ENCODE measurements at regions of chr7 and their contacts with region 1.

Region 1: DNA sequence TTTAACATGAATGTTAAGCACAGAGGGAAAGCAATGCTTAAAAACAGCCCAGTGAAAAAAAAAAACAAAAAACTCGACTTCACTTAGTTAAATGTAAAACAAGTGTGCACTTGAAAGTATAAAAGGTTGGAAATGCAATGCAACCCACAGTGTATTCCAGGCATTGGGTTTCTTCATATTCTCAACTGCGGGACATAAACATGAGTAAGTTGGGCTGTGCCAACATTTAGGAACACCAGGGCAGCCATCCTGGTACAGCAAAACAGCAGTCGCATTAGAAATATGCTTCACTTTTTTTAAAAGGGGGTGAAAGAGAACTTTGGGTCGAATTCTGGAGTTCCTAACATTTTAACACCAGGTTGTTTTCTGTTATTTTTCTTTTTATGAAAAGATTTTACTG is 937 bp downstream of the STEAP1 start:
- DNase-seq: no peak
- ATAC-seq: no peak
- H3K4me3 ChIP-seq: no peak overlapping the region
- H3K27ac ChIP-seq: no peak overlapping the region
- H3K4me1 ChIP-seq: peaks cover 0 to 10% (median 0%) of the 10 kb centered on the region in 12 donors
- H3K27me3 ChIP-seq: no peaks in the 10 kb centered on the region
- CTCF ChIP-seq: no peak
- POLR2A ChIP-seq: no peak

Region 2: GRCh38 chr7:90211391-90212148 is 56.4 kb after region 1 on chr7 and contains the start of gene STEAP2:
- intact Hi-C with region 1: loop called in 1 of 10 experiments (anchors 5 kb)
- DNase-seq: peak; percentile 81 to 95 (median 90)
- ATAC-seq: peak; percentile 96 to 100 (median 99)
- H3K4me3 ChIP-seq: peak within 1 kb of the TSS; percentile 59 to 77 (median 69)
- H3K27ac ChIP-seq: peak within 1 kb of the TSS; percentile 55 to 87 (median 74)
- H3K4me1 ChIP-seq: peaks cover 0 to 18% (median 5%) of the 10 kb centered on the region in 12 donors
- H3K27me3 ChIP-seq: peaks cover 0 to 33% (median 0%) of the 10 kb centered on the region in 9 donors
- CTCF ChIP-seq: peak in 11 of 12 donors; percentile 29 to 68 (median 47)
- POLR2A ChIP-seq: peak in 1 of 2 donors; percentile 30
- total RNA-seq, gene STEAP2: 6.2 to 16.7 (median 9.1) TPM

Region 3: GRCh38 chr7:90256778-90257177 is 101.6 kb after region 1 on chr7:
- intact Hi-C with region 1: loop called in 6 of 10 experiments (anchors 5 to 10 kb)
- DNase-seq: no peak
- ATAC-seq: no peak
- H3K4me3 ChIP-seq: no peak overlapping the region
- H3K27ac ChIP-seq: no peak overlapping the region
- H3K4me1 ChIP-seq: no peaks in the 10 kb centered on the region
- H3K27me3 ChIP-seq: no peaks in the 10 kb centered on the region
- CTCF ChIP-seq: no peak
- POLR2A ChIP-seq: no peak

Region 4: GRCh38 chr7:90262438-90262837 is 107.2 kb after region 1 on chr7:
- intact Hi-C with region 1: loop called in 7 of 10 experiments (anchors 2 to 10 kb)
- DNase-seq: no peak
- ATAC-seq: peak in 1 of 4 donors; percentile 66
- H3K4me3 ChIP-seq: no peak overlapping the region
- H3K27ac ChIP-seq: no peak overlapping the region
- H3K4me1 ChIP-seq: no peaks in the 10 kb centered on the region
- H3K27me3 ChIP-seq: no peaks in the 10 kb centered on the region
- CTCF ChIP-seq: peak in 11 of 12 donors; percentile 26 to 61 (median 40)
- POLR2A ChIP-seq: no peak

Region 5: DNA sequence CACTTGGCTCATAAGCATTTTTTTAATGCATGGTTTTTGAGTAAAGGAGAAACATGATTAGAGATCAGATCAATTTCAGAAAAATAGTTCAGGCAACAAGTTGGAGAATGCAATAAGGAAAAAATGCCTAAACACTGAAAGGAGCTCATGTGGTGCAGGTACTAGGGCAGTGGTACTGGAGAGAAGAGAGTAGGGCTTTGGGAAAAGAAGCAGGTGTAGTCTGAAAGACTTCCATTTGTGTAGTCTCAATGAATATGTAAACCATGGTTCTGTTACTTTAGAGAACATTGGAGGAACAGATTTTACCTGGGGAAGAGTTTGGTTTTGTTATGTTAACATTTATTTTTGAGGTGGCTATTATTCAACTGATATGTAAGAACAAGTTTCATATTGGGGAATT is 196.8 kb after region 1 on chr7:
- intact Hi-C with region 1: no loop called
- DNase-seq: no peak
- ATAC-seq: no peak
- H3K4me3 ChIP-seq: no peak overlapping the region
- H3K27ac ChIP-seq: no peak overlapping the region
- H3K4me1 ChIP-seq: peaks cover 0 to 13% (median 10%) of the 10 kb centered on the region in 12 donors
- H3K27me3 ChIP-seq: no peaks in the 10 kb centered on the region
- CTCF ChIP-seq: no peak
- POLR2A ChIP-seq: no peak

Region 6: GRCh38 chr7:90424720-90425119 is 269.5 kb after region 1 on chr7:
- intact Hi-C with region 1: loop called in 9 of 10 experiments (anchors 1 to 5 kb)
- DNase-seq: no peak
- ATAC-seq: no peak
- H3K4me3 ChIP-seq: no peak overlapping the region
- H3K27ac ChIP-seq: no peak overlapping the region
- H3K4me1 ChIP-seq: peaks cover 0 to 11% (median 0%) of the 10 kb centered on the region in 12 donors
- H3K27me3 ChIP-seq: no peaks in the 10 kb centered on the region
- CTCF ChIP-seq: no peak
- POLR2A ChIP-seq: no peak

Region 7: DNA sequence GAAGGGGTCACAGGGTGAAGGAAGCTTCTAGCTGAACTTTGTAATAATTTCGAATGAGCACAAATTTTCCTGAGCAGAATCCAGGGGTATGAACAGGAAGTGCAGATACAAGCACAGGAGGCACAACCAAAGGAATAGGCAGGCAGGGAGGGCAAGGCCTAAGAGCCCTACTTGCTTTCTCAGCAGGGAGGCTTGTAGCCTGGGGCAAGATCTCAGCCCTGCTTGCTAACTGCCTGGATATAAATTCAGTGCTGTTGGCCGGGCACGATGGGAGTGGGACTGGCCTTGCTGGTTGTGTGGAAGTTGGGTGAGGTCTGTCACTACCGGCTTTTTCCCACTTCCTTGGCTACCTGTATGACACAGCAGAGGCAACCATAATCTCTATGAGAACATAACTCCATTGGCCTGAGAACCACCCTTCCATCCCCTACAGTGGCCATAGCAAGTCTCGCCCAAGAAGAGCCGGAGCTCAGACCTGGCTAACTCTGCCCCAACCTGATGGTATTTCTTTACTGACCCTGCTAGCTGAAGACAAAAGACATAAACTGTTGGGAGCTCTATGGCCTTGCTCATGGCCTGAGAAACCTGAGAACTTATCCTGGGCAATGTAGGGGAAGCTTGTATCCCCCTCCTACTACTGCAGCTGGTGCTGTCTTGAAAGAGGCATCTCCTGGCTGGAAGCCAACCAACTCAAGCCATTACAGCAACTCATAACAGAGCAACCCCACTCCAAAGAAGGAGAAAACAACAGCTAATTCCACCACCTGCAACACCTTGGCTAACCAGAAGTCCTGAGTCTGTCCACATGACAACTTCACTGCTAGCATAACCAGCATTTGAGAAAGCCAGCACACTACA is 275.6 kb after region 1 on chr7:
- intact Hi-C with region 1: loop called (anchors 1 to 5 kb)
- DNase-seq: no peak
- ATAC-seq: no peak
- H3K4me3 ChIP-seq: no peak overlapping the region
- H3K27ac ChIP-seq: no peak overlapping the region
- H3K4me1 ChIP-seq: no peaks in the 10 kb centered on the region
- H3K27me3 ChIP-seq: no peaks in the 10 kb centered on the region
- CTCF ChIP-seq: no peak
- POLR2A ChIP-seq: no peak